Endothelial cell of umbilical vein (primary cell): ENCODE measurements at regions of chr7 and their contacts with region 1.

Region 1: DNA sequence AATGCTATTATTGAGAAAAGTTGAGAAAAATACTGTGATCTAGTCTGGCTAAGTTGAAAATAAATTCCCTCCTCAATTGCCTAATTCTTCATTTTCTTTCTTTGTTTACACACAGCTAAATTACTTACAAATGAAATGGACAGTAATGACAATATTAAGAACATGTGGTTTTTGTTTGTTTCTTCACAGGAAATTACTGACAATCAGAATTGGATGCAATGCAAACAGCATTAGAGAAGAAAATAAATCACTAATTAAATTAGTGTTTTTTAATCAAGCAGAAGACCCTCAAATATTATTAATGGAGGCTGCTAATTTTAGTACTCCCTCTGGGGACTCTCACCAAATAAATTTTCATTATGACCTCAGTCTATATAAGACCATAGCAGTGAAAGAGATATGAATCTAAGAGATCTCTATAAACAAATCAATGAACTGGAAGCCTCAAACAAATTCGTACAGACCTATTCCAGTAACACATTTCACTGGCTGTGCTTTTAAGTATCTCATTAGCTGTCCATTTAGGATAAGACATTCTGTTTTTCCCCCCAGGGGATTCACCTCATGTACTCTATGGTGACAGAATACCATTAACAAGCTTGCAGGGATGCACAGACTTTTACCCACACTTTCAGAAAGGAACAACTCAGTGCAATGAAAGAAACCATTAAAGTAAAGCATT is 202.0 kb upstream of the DGKB start:
- DNase-seq: no peak
- H3K4me3 ChIP-seq: no peak overlapping the region
- H3K27ac ChIP-seq: no peak overlapping the region
- H3K4me1 ChIP-seq: no peaks in the 10 kb centered on the region
- H3K27me3 ChIP-seq: no peaks in the 10 kb centered on the region
- CTCF ChIP-seq: no peak
- POLR2A ChIP-seq: no peak

Region 2: GRCh38 chr7:15178065-15178464 is 73.5 kb after region 1 on chr7:
- CTCF ChIA-PET with region 1: no interaction called
- POLR2A ChIA-PET with region 1: no interaction called
- dilution Hi-C with region 1: no loop called
- intact Hi-C with region 1: loop called (anchors 5 kb)
- DNase-seq: no peak
- H3K4me3 ChIP-seq: no peak overlapping the region
- H3K27ac ChIP-seq: no peak overlapping the region
- H3K4me1 ChIP-seq: no peaks in the 10 kb centered on the region
- H3K27me3 ChIP-seq: no peaks in the 10 kb centered on the region
- CTCF ChIP-seq: no peak
- POLR2A ChIP-seq: no peak